ENCODE measurements at regions of chr2 and their contacts with region 1.

Region 1: DNA sequence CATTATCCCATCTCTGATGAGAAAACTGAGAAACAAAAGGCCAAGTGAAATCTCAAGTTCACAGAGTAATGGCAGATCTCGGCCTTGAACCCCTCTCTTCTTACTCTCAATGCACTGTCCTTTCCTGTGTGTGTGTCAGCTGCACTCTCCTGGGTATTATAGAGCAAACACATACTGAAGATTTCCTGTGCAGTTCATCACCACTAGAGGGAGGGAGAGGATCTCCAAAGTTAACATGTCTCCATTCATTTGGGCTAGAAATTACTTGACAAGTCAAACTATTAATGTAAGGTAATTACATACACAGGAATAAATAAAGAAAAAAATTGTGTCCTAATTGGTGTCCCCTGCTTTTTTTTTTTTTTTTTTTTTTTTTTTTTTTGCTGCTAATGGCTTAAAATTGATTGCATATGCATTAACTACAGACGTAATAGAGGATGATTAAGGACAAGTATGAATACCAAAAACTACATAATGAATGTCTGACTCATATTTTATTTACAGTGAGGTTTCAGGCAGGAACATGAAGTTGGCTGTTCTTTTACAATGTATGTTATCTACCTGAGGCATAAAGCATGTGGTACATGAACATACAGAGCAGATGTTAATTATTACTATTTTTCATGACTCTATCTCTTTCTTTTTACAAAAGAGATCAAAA is 269.2 kb downstream of the NYAP2 start:
- DNase-seq: peak; percentile 81
- ATAC-seq: peak; percentile 94
- H3K4me3 ChIP-seq: no peak overlapping the region
- H3K27ac ChIP-seq: no peak overlapping the region
- H3K4me1 ChIP-seq: peaks cover under 1% of the 10 kb centered on the region; the same call in 1 of the 2 replicates
- H3K27me3 ChIP-seq: no peaks in the 10 kb centered on the region
- CTCF ChIP-seq: peak; percentile 82
- POLR2A ChIP-seq: no peak
- RAD21 ChIP-seq: peak; percentile 78

Region 2: GRCh38 chr2:225466891-225467604 is 201.7 kb before region 1 on chr2:
- CTCF ChIA-PET with region 1: no interaction called
- POLR2A ChIA-PET with region 1: no interaction called
- dilution Hi-C with region 1: no loop called
- in situ Hi-C with region 1: no loop called
- intact Hi-C with region 1: no loop called
- DNase-seq: no peak
- ATAC-seq: no peak
- H3K4me3 ChIP-seq: no peak overlapping the region
- H3K27ac ChIP-seq: no peak overlapping the region
- H3K4me1 ChIP-seq: no peaks in the 10 kb centered on the region
- H3K27me3 ChIP-seq: no peaks in the 10 kb centered on the region
- CTCF ChIP-seq: no peak
- POLR2A ChIP-seq: no peak
- RAD21 ChIP-seq: no peak

Region 3: DNA sequence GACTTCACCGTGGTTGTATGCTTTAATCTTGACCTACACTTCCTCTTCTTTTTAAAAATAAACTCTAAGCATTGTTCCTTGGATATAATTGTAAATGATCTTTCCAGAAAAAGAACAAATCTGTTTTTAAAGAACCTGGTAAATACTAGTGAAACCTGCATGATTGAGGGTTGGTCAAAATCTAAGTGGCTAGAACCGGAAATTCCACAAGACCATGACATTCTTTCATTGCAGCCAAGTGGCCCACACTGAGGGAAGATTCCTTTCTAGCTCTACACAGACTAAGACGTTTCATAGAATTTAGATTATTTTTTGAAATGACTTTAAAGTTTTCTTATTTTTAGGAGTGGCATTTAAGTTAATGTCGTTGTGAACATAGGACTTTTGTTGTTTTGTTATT is 87.5 kb after region 1 on chr2:
- CTCF ChIA-PET with region 1: no interaction called
- POLR2A ChIA-PET with region 1: no interaction called
- dilution Hi-C with region 1: no loop called
- in situ Hi-C with region 1: no loop called
- intact Hi-C with region 1: no loop called
- DNase-seq: no peak
- ATAC-seq: no peak
- H3K4me3 ChIP-seq: no peak overlapping the region
- H3K27ac ChIP-seq: no peak overlapping the region
- H3K4me1 ChIP-seq: no peaks in the 10 kb centered on the region
- H3K27me3 ChIP-seq: no peaks in the 10 kb centered on the region
- CTCF ChIP-seq: no peak
- POLR2A ChIP-seq: no peak
- RAD21 ChIP-seq: no peak

Region 4: GRCh38 chr2:225806105-225806504 is 137.4 kb after region 1 on chr2:
- CTCF ChIA-PET with region 1: no interaction called
- POLR2A ChIA-PET with region 1: no interaction called
- dilution Hi-C with region 1: no loop called
- in situ Hi-C with region 1: no loop called
- intact Hi-C with region 1: no loop called
- DNase-seq: peak; percentile 42
- ATAC-seq: no peak; the same call in 1 of the 2 replicates
- H3K4me3 ChIP-seq: no peak overlapping the region
- H3K27ac ChIP-seq: no peak overlapping the region
- H3K4me1 ChIP-seq: no peaks in the 10 kb centered on the region
- H3K27me3 ChIP-seq: no peaks in the 10 kb centered on the region
- CTCF ChIP-seq: no peak
- POLR2A ChIP-seq: no peak
- RAD21 ChIP-seq: no peak

Region 5: GRCh38 chr2:225889446-225889850 is 220.7 kb after region 1 on chr2:
- CTCF ChIA-PET with region 1: interaction called, 3 read pairs
- POLR2A ChIA-PET with region 1: no interaction called
- dilution Hi-C with region 1: no loop called
- in situ Hi-C with region 1: no loop called
- intact Hi-C with region 1: loop called (anchors 2 kb)
- DNase-seq: peak; percentile 94
- ATAC-seq: peak; percentile 81
- H3K4me3 ChIP-seq: no peak overlapping the region
- H3K27ac ChIP-seq: peak overlapping the region; percentile 40; the same call in 1 of the 2 replicates
- H3K4me1 ChIP-seq: peaks cover 6% of the 10 kb centered on the region
- H3K27me3 ChIP-seq: no peaks in the 10 kb centered on the region
- CTCF ChIP-seq: peak; percentile 85
- POLR2A ChIP-seq: no peak
- RAD21 ChIP-seq: peak; percentile 82

Region 6: GRCh38 chr2:226185616-226186211 is 517.0 kb after region 1 on chr2:
- CTCF ChIA-PET with region 1: interaction called, 3 read pairs
- POLR2A ChIA-PET with region 1: no interaction called
- dilution Hi-C with region 1: no loop called
- in situ Hi-C with region 1: loop called (anchors 10 kb)
- intact Hi-C with region 1: loop called (anchors 1 kb)
- DNase-seq: peak; percentile 98
- ATAC-seq: peak; percentile 73
- H3K4me3 ChIP-seq: peak overlapping the region; percentile 24; the same call in 1 of the 2 replicates
- H3K27ac ChIP-seq: peak overlapping the region; percentile 100
- H3K4me1 ChIP-seq: peaks cover 28% of the 10 kb centered on the region
- H3K27me3 ChIP-seq: no peaks in the 10 kb centered on the region
- CTCF ChIP-seq: no peak
- POLR2A ChIP-seq: no peak
- RAD21 ChIP-seq: no peak; the same call in 1 of the 2 replicates

Region 7: GRCh38 chr2:226308986-226309385 is 640.2 kb after region 1 on chr2:
- CTCF ChIA-PET with region 1: no interaction called
- POLR2A ChIA-PET with region 1: no interaction called
- dilution Hi-C with region 1: no loop called
- in situ Hi-C with region 1: no loop called
- intact Hi-C with region 1: no loop called
- DNase-seq: peak; percentile 76
- ATAC-seq: no peak
- H3K4me3 ChIP-seq: no peak overlapping the region
- H3K27ac ChIP-seq: peak overlapping the region; percentile 55; the same call in 1 of the 2 replicates
- H3K4me1 ChIP-seq: peaks cover 5% of the 10 kb centered on the region; the same call in 1 of the 2 replicates
- H3K27me3 ChIP-seq: no peaks in the 10 kb centered on the region
- CTCF ChIP-seq: no peak
- POLR2A ChIP-seq: no peak
- RAD21 ChIP-seq: no peak

Region 8: DNA sequence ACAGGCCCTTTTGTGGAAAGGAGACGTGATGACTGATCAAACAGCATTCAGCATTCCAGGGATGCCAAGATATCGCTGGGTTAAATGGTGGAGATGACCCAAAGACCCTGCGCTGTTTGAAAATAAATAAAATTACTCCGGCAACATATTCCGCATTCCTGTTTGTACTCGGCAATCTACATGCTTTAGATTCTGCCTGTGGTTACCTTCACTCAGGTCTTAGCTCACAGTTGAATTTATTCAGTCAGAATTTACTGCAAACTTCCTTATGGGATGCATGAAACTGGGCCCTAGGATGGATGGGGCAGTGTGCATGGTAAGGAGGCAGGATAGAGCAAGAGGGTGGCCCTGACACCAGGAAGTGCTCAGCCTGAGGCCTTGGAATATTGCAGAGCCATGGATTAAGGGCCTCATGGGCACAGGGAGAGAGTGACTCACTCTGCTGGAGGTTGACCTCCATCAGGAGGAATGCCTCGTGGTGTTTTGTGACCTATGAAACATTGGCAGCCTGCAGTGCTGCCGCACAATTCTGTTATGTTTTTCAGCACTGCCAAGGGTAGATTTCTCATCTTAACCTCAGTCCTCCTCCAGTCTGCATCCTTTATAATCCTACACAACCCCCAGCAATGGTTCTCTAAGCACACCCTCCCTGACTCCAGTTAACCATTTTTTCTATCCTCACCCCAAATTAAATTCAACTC is 809.5 kb after region 1 on chr2:
- CTCF ChIA-PET with region 1: no interaction called
- POLR2A ChIA-PET with region 1: no interaction called
- dilution Hi-C with region 1: no loop called
- in situ Hi-C with region 1: no loop called
- intact Hi-C with region 1: loop called (anchors 10 kb)
- DNase-seq: peak; percentile 96
- ATAC-seq: peak; percentile 87
- H3K4me3 ChIP-seq: no peak overlapping the region
- H3K27ac ChIP-seq: peak overlapping the region; percentile 96
- H3K4me1 ChIP-seq: peaks cover 29% of the 10 kb centered on the region
- H3K27me3 ChIP-seq: no peaks in the 10 kb centered on the region
- CTCF ChIP-seq: no peak
- POLR2A ChIP-seq: no peak
- RAD21 ChIP-seq: peak; percentile 7

Region 9: DNA sequence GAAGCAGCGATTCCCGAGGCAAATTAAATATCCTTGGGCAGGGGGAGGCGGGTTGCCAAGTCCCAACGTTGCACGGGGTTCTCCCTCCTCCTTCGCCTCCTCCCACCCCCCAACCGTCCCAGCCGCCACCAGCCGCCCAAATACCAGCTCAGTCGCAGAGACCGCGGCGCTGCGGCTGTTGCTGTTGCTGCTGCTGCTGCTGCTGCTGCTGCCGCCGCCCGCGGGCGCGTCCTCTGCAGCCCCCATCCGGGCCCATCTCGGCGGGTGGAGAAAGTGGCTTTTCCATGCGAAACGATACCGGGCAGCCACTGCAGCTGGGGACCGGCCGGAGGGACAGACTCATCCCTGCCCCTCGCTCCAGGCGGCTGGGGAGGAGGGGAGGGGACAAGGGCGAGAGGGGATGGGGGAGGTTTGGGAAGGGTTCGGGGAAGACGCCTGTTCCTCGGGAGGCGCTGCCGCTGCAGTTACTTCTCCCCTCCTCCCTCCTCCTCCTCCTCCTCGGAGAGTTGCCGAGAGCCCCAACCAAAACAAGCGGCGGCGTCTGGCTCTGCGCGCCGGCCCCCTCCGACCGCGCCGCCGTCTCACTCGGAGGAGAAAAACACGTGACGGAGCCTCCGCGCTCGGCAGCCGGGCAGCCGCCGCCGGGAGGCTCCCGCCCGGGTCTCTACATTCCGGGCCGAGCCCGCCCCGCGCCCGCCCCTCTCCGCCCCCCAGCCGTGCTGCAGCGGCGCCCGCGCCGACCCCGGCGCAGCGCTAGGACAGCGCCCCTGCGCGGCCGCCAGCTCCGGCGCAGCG is 1130.6 kb after region 1 on chr2 and contains the start of gene IRS1:
- CTCF ChIA-PET with region 1: interaction called, 5 read pairs
- POLR2A ChIA-PET with region 1: no interaction called
- dilution Hi-C with region 1: no loop called
- in situ Hi-C with region 1: loop called (anchors 5 kb)
- intact Hi-C with region 1: loop called (anchors 1 kb)
- DNase-seq: peak; percentile 79
- ATAC-seq: peak; percentile 40
- H3K4me3 ChIP-seq: peak within 1 kb of the TSS; percentile 78
- H3K27ac ChIP-seq: peak within 1 kb of the TSS; percentile 97
- H3K4me1 ChIP-seq: peaks cover 2% of the 10 kb centered on the region; the same call in 1 of the 2 replicates
- H3K27me3 ChIP-seq: no peaks in the 10 kb centered on the region
- CTCF ChIP-seq: peak; percentile 62
- POLR2A ChIP-seq: no peak
- RAD21 ChIP-seq: peak; percentile 53
- total RNA-seq, gene IRS1: 21.1 and 29.4 TPM in 2 replicates

Region 10: GRCh38 chr2:227238238-227239237 is 1569.8 kb after region 1 on chr2:
- CTCF ChIA-PET with region 1: interaction called, 7 read pairs
- POLR2A ChIA-PET with region 1: no interaction called
- dilution Hi-C with region 1: no loop called
- in situ Hi-C with region 1: no loop called
- intact Hi-C with region 1: loop called (anchors 5 kb)
- DNase-seq: peak; percentile 61
- ATAC-seq: peak; percentile 79
- H3K4me3 ChIP-seq: no peak overlapping the region
- H3K27ac ChIP-seq: no peak overlapping the region
- H3K4me1 ChIP-seq: no peaks in the 10 kb centered on the region
- H3K27me3 ChIP-seq: peaks cover 8% of the 10 kb centered on the region
- CTCF ChIP-seq: peak; percentile 92
- POLR2A ChIP-seq: no peak
- RAD21 ChIP-seq: peak; percentile 64

Measured in IMR-90 (cell line).